Activated CD4-positive, alpha-beta T cell treated with anti-CD3 and anti-CD28 coated beads, Interleukin-2, amount 10 ng/mL, durations not matched to agents 24 days and 14 days (primary cell): ENCODE measurements at regions of chr4 and their contacts with region 1.

Region 1: DNA sequence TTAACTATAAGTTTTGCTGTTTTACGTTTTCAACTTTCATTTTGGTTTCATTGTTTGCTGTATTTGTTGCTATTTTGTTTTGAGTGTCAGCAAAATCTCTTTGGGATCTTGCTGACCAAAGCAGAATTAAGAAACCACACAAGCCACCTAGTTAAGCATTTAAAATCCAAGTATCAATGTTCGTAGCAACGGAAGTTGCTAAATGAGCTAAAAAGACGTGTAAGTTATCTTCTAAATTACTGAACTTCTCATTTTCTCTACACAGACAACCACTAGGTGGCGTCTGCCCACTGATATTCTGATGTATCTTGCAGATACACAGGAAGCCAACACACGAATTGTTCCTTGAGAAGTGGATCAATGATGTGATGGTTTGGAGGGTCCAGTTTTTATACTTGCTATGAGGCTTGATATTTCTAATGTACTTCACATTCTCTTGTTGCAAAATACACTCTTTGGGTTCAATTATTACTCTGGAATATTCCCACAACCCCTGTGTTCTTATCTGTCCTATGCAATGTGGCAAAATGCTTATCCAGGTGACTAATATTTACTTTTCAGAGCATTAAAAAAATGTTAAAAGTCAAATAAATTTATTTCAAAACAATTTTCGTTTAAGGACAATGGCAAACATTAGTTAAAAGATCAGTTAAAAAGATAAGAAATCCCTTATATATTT is 250.5 kb downstream of the TECRL start:
- DNase-seq: peak; percentile 84
- H3K4me3 Mint-ChIP-seq: no peak overlapping the region
- H3K27ac Mint-ChIP-seq: no peak overlapping the region
- H3K4me1 Mint-ChIP-seq: no peaks in the 10 kb centered on the region
- H3K27me3 Mint-ChIP-seq: no peaks in the 10 kb centered on the region

Region 2: GRCh38 chr4:64539234-64539849 is 380.6 kb after region 1 on chr4:
- intact Hi-C with region 1: loop called (anchors 1 kb)
- DNase-seq: peak; percentile 77
- H3K4me3 Mint-ChIP-seq: no peak overlapping the region
- H3K27ac Mint-ChIP-seq: no peak overlapping the region
- H3K4me1 Mint-ChIP-seq: no peaks in the 10 kb centered on the region
- H3K27me3 Mint-ChIP-seq: no peaks in the 10 kb centered on the region